Left lung (tissue), 14 donors: ENCODE measurements at regions of chr3 and their contacts with region 1.

Region 1: GRCh38 chr3:41881233-41881821 is 80.6 kb downstream of the ULK4 start:
- DNase-seq: peak in 2 of 4 donors; percentile 31 to 61
- ATAC-seq: peak; percentile 17
- H3K4me3 ChIP-seq: no peak overlapping the region
- H3K27ac ChIP-seq: no peak overlapping the region
- H3K4me1 ChIP-seq: no peaks in the 10 kb centered on the region
- H3K27me3 ChIP-seq: no peaks in the 10 kb centered on the region
- CTCF ChIP-seq: peak; percentile 43 to 62

Region 2: GRCh38 chr3:40580494-40581091 is 1300.7 kb before region 1 on chr3:
- intact Hi-C with region 1: loop called in 1 of 2 experiments (anchors 5 kb)
- DNase-seq: peak in 3 of 4 donors; percentile 52 to 75 (median 56)
- ATAC-seq: peak; percentile 82
- H3K4me3 ChIP-seq: no peak overlapping the region
- H3K27ac ChIP-seq: no peak overlapping the region
- H3K4me1 ChIP-seq: peaks cover 0 to 4% of the 10 kb centered on the region in 2 donors
- H3K27me3 ChIP-seq: no peaks in the 10 kb centered on the region
- CTCF ChIP-seq: peak; percentile 89 to 90